Sciatic nerve (tissue), 2 donors: ENCODE measurements at regions of chr2 and their contacts with region 1.

Region 1: GRCh38 chr2:84459944-84460429 is 907 bp upstream of the SUCLG1 start:
- DNase-seq: no peak
- ATAC-seq: no peak

Region 2: GRCh38 chr2:86195055-86195807 is 1735.2 kb after region 1 on chr2 and contains the start of gene IMMT:
- intact Hi-C with region 1: loop called (anchors 10 kb)
- DNase-seq: peak; percentile 97
- ATAC-seq: peak; percentile 96
- total RNA-seq, gene IMMT: 60.0 TPM